ENCODE measurements at regions of chr15 and their contacts with region 1.

Region 1: DNA sequence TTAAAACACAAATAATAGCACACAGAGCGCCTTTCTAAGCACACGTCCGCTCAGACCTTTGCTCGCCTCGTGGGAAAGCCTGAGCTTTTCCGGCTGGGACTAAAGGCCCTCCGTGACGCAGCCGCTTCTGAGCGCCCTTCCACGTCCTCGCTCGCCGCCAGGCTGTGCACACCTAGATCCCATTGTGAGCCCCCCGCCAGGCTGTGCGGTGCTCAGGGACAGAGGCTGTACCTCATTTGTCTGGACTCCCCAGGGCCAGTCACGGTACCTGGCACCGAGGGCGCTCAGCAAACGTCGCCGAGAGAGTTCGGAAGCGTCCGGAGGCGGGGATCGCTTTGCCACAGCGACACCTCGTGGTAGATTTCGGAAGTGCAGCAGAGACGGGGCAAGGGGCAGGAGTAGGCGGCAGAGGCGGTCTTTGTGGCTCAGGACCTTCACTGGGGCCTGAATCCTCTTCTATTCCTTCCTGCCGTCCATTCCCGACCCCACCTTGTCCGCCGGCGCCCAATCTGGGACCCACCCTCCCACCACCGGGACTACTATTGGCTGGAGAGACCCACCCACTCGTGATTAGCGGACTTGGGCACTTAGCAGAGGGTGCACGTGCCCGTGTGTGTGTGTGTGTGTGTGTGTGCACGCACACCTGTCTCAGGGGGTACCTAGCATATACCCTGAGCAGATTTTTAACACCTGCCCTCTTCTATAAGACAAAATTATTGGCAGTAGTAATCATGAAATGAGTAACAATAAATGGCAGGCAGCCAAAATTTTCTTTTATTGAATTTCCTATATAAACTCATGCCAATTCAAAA is 65.6 kb downstream of the RHCG start:
- H3K4me3 ChIP-seq: peak overlapping the region; percentile 18; the same call in 1 of the 2 replicates
- H3K27ac ChIP-seq: no peak overlapping the region
- H3K4me1 ChIP-seq: no peaks in the 10 kb centered on the region
- CTCF ChIP-seq: peak; percentile 95

Region 2: GRCh38 chr15:89399238-89400120 is 31.3 kb before region 1 on chr15:
- CTCF ChIA-PET with region 1: interaction called, 15 read pairs
- POLR2A ChIA-PET with region 1: no interaction called
- H3K4me3 ChIP-seq: peak overlapping the region; percentile 45
- H3K27ac ChIP-seq: peak overlapping the region; percentile 66; the same call in 1 of the 2 replicates
- H3K4me1 ChIP-seq: peaks cover 8% of the 10 kb centered on the region
- CTCF ChIP-seq: peak; percentile 85

Region 3: GRCh38 chr15:89448825-89449224 is 18.1 kb after region 1 on chr15:
- CTCF ChIA-PET with region 1: interaction called, 67 read pairs
- POLR2A ChIA-PET with region 1: no interaction called
- H3K4me3 ChIP-seq: no peak overlapping the region
- H3K27ac ChIP-seq: no peak overlapping the region
- H3K4me1 ChIP-seq: peaks cover 9% of the 10 kb centered on the region
- CTCF ChIP-seq: no peak

Measured in HEK293 (cell line).